B cell (primary cell): ENCODE measurements at regions of chr10 and their contacts with region 1.

Region 1: DNA sequence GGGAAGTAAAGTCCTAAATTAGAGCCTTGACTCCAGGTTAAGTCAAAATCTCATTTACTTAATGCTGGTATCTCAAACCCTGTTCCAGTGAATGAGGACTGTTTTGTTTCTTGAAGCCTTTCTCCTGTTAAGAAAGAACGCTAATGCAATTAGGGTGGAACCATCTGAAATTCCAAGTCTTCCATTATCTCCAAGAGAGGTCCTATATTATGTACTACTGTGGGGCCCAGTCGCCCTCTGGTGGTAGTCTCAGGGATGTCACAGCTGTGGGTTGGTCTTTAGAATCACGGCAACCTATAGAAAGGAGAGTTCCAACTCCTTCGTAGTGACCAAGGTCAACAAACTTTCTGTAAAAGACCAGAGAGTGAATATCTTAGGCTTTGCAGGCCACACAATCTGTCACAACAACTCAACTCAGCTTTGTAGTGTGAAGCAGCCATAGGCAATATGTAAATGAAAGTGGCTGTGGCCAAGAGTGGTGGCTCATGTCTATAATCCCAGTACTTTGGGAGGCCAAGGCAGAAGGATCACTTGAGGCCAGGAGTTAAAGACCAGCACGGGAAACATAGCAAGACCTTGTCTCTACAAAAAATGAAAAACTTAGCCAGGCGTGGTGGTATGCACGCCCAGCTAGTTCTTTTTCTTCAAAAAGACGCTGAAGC is 9.3 kb downstream of the RPP38 start:
- DNase-seq: peak; percentile 76
- ATAC-seq: peak; percentile 96
- H3K4me3 ChIP-seq: no peak overlapping the region
- H3K4me3 Mint-ChIP-seq: no peak overlapping the region
- H3K27ac ChIP-seq: peak overlapping the region in 1 of 2 donors; percentile 10
- H3K27ac Mint-ChIP-seq: peak overlapping the region; percentile 43
- H3K4me1 ChIP-seq: peaks cover 0 to 3% of the 10 kb centered on the region in 2 donors
- H3K4me1 Mint-ChIP-seq: peaks cover 6% of the 10 kb centered on the region
- H3K27me3 ChIP-seq: no peaks in the 10 kb centered on the region
- H3K27me3 Mint-ChIP-seq: no peaks in the 10 kb centered on the region
- CTCF ChIP-seq: peak; percentile 92

Region 2: DNA sequence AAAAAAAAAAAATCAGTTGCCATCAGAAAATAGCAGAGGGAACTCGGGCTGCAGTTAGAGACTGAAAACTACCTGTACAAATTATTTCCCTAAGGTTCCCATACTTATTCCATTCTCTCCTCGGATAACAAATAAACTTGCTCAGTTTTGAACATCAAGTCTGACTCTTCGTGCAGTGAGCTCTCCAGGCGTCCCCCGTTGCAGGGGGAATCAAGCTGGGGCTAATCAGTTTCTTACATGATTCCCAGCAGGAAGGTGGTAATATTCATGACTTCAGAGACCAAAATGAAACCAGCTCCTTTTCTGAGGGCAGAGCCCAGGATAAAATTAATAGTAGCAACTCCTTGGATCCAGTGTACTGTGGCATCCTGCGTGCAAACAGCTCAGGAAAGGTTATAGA is 911.0 kb before region 1 on chr10:
- CTCF ChIA-PET with region 1: interaction called, 10 read pairs
- POLR2A ChIA-PET with region 1: no interaction called
- intact Hi-C with region 1: loop called (anchors 5 kb)
- DNase-seq: no peak
- ATAC-seq: no peak
- H3K4me3 ChIP-seq: no peak overlapping the region
- H3K4me3 Mint-ChIP-seq: no peak overlapping the region
- H3K27ac ChIP-seq: no peak overlapping the region
- H3K27ac Mint-ChIP-seq: no peak overlapping the region
- H3K4me1 ChIP-seq: peaks cover 3 to 8% of the 10 kb centered on the region in 2 donors
- H3K4me1 Mint-ChIP-seq: peaks cover 3% of the 10 kb centered on the region
- H3K27me3 ChIP-seq: peaks cover 0 to 6% (median 5%) of the 10 kb centered on the region in 4 experiments
- H3K27me3 Mint-ChIP-seq: peaks cover 53% of the 10 kb centered on the region
- CTCF ChIP-seq: no peak

Region 3: GRCh38 chr10:14815681-14816080 is 290.8 kb before region 1 on chr10:
- CTCF ChIA-PET with region 1: no interaction called
- POLR2A ChIA-PET with region 1: no interaction called
- intact Hi-C with region 1: no loop called
- DNase-seq: no peak
- ATAC-seq: no peak
- H3K4me3 ChIP-seq: no peak overlapping the region
- H3K4me3 Mint-ChIP-seq: no peak overlapping the region
- H3K27ac ChIP-seq: no peak overlapping the region
- H3K27ac Mint-ChIP-seq: no peak overlapping the region
- H3K4me1 ChIP-seq: peaks cover 1 to 4% of the 10 kb centered on the region in 2 donors
- H3K4me1 Mint-ChIP-seq: peaks cover 17% of the 10 kb centered on the region
- H3K27me3 ChIP-seq: no peaks in the 10 kb centered on the region
- H3K27me3 Mint-ChIP-seq: no peaks in the 10 kb centered on the region
- CTCF ChIP-seq: no peak

Region 4: GRCh38 chr10:15053061-15053460 is 53.4 kb before region 1 on chr10:
- CTCF ChIA-PET with region 1: no interaction called
- POLR2A ChIA-PET with region 1: no interaction called
- intact Hi-C with region 1: no loop called
- DNase-seq: no peak
- ATAC-seq: no peak
- H3K4me3 ChIP-seq: no peak overlapping the region
- H3K4me3 Mint-ChIP-seq: no peak overlapping the region
- H3K27ac ChIP-seq: no peak overlapping the region
- H3K27ac Mint-ChIP-seq: no peak overlapping the region
- H3K4me1 ChIP-seq: no peaks in the 10 kb centered on the region
- H3K4me1 Mint-ChIP-seq: no peaks in the 10 kb centered on the region
- H3K27me3 ChIP-seq: peaks cover 0 to 3% (median 0%) of the 10 kb centered on the region in 4 experiments
- H3K27me3 Mint-ChIP-seq: peaks cover 14% of the 10 kb centered on the region
- CTCF ChIP-seq: no peak

Region 5: DNA sequence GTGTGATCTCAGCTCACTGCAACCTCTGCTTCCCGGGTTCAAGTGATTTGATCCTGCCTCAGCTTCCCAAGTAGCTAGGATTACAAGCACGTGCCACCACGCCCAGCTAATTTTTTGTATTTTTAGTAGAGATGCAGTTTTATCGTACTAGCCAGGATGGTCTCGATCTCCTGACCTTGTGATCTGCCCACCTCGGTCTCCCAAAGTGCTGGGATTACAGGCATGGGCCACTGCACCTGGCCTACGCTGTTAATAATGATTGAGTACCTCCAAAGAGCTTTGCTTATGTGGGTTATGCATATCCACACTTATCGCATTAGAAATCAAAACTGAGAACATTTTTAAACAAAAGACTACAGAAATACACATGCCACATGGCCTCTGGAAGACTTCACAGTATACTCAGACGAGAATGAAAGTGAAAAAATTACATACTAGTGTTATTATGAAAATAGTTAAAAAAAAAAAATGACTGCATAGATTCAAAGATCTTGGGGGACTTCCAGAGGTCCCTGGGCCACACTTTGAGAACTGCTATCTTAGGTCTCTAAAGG is 16.1 kb after region 1 on chr10:
- CTCF ChIA-PET with region 1: interaction called, 25 read pairs
- POLR2A ChIA-PET with region 1: no interaction called
- intact Hi-C with region 1: no loop called
- DNase-seq: no peak
- ATAC-seq: no peak
- H3K4me3 ChIP-seq: no peak overlapping the region
- H3K4me3 Mint-ChIP-seq: no peak overlapping the region
- H3K27ac ChIP-seq: no peak overlapping the region
- H3K27ac Mint-ChIP-seq: no peak overlapping the region
- H3K4me1 ChIP-seq: no peaks in the 10 kb centered on the region
- H3K4me1 Mint-ChIP-seq: peaks cover 10% of the 10 kb centered on the region
- H3K27me3 ChIP-seq: no peaks in the 10 kb centered on the region
- H3K27me3 Mint-ChIP-seq: no peaks in the 10 kb centered on the region
- CTCF ChIP-seq: no peak